ENCODE measurements at regions of chr4 and their contacts with region 1.

Region 1: DNA sequence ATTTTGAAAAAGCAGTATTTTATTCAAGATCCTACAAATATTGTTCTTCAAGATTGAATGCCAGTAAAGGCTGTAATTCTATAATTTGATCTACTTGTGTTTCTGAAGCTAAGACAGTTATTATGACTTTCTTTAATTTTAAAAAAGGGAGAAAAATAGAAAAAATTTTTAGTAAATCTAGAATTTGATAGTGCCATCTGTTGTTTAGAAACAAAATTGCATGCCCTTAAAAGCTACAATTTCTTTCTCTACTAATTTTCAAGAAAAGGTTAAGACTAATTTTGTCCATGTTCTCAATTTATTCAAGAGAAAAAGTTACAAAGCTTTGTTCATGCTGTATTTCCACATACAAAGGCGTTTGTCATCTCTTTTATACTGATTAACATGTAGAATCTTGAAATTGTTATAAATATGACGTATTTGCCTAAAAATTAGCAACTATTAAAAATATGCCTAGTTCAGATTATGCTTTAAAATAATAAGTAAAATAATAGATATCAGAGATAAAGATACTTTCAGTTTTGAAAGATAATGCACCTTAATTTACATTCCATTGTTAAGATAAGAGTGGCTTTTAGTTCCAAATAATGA is 25.6 kb upstream of the MMRN1 start:
- DNase-seq: no peak
- H3K4me3 ChIP-seq: no peak overlapping the region
- H3K27ac ChIP-seq: no peak overlapping the region
- H3K4me1 ChIP-seq: no peaks in the 10 kb centered on the region
- H3K27me3 ChIP-seq: no peaks in the 10 kb centered on the region
- CTCF ChIP-seq: peak; percentile 79
- EP300 ChIP-seq: no peak
- RAD21 ChIP-seq: peak; percentile 50

Region 2: GRCh38 chr4:89665677-89666076 is 203.4 kb before region 1 on chr4:
- CTCF ChIA-PET with region 1: interaction called, 10 read pairs
- POLR2A ChIA-PET with region 1: no interaction called
- DNase-seq: no peak
- H3K4me3 ChIP-seq: no peak overlapping the region
- H3K27ac ChIP-seq: no peak overlapping the region
- H3K4me1 ChIP-seq: no peaks in the 10 kb centered on the region; a peak in 1 of 4 replicates
- H3K27me3 ChIP-seq: no peaks in the 10 kb centered on the region
- CTCF ChIP-seq: no peak
- EP300 ChIP-seq: no peak
- RAD21 ChIP-seq: no peak

Region 3: GRCh38 chr4:90127223-90127705 is 258.2 kb after region 1 on chr4 and contains the start of gene CCSER1:
- CTCF ChIA-PET with region 1: no interaction called
- POLR2A ChIA-PET with region 1: no interaction called
- DNase-seq: peak; percentile 90
- H3K4me3 ChIP-seq: peak within 1 kb of the TSS; percentile 52 to 56
- H3K27ac ChIP-seq: peak within 1 kb of the TSS in 1 of 2 experiments; percentile 84; a peak in 2 of 4 replicates
- H3K4me1 ChIP-seq: no peaks in the 10 kb centered on the region; a peak in 2 of 4 replicates
- H3K27me3 ChIP-seq: peaks cover 11% of the 10 kb centered on the region
- CTCF ChIP-seq: no peak
- EP300 ChIP-seq: no peak
- RAD21 ChIP-seq: peak; percentile 32
- polyA plus RNA-seq, gene CCSER1: 0.02 and 0.05 TPM in 2 replicates

Region 4: GRCh38 chr4:90174611-90175133 is 305.6 kb after region 1 on chr4:
- CTCF ChIA-PET with region 1: no interaction called
- POLR2A ChIA-PET with region 1: no interaction called
- DNase-seq: no peak
- H3K4me3 ChIP-seq: no peak overlapping the region
- H3K27ac ChIP-seq: no peak overlapping the region
- H3K4me1 ChIP-seq: no peaks in the 10 kb centered on the region
- H3K27me3 ChIP-seq: no peaks in the 10 kb centered on the region
- CTCF ChIP-seq: no peak
- EP300 ChIP-seq: no peak
- RAD21 ChIP-seq: no peak

Measured in SK-N-SH (cell line).